Esophagus muscularis mucosa (tissue), 4 donors: ENCODE measurements at regions of chr21 and their contacts with region 1.

Region 1: DNA sequence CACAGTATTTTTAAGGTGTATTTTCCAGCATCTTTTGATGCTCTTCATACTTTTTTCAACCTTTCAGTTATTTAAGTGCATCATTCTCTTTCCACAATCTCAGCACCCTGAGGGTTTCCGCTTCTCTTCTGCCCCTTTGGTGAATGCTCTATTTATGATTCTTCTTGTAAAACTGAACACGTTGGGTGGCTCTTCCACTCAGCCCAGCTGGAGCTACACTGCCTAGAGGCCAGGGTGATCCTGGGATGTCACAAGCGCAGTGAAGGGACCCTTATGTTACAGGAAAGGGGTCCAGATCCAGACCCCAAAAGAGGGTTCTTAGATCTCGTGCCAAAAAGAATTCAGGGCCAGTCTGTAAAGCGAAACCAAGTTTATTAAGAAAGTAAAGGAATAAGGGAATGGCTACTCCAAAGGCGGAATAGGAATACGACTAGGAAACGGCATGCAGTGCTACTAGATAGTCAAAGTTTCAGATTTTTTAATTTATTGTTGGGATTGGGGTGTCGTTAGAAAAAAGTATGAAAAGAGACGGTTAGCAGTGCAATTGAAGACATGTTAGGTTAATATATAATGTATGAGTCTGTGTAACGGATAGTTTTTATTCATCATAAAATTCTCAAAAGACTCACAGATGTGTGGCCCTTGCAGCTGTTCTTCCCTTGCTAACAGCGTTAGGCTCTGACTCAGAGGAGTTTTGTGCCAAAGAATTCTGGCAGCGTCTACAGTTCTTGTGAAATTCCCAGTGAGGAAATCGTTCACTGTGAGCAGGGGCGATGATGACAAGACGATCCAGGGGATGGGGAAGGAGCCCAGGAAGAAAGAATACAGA is 14.4 kb upstream of the ERVH48-1 start:
- DNase-seq: peak; percentile 93
- H3K4me3 ChIP-seq: peak overlapping the region in 3 of 4 donors; percentile 18 to 29 (median 25)
- H3K27ac ChIP-seq: peak overlapping the region; percentile 68 to 75 (median 68)
- H3K4me1 ChIP-seq: peaks cover 0 to 21% (median 13%) of the 10 kb centered on the region in 4 donors
- H3K27me3 ChIP-seq: no peaks in the 10 kb centered on the region
- CTCF ChIP-seq: no peak
- EP300 ChIP-seq: no peak
- POLR2A ChIP-seq: no peak

Region 2: DNA sequence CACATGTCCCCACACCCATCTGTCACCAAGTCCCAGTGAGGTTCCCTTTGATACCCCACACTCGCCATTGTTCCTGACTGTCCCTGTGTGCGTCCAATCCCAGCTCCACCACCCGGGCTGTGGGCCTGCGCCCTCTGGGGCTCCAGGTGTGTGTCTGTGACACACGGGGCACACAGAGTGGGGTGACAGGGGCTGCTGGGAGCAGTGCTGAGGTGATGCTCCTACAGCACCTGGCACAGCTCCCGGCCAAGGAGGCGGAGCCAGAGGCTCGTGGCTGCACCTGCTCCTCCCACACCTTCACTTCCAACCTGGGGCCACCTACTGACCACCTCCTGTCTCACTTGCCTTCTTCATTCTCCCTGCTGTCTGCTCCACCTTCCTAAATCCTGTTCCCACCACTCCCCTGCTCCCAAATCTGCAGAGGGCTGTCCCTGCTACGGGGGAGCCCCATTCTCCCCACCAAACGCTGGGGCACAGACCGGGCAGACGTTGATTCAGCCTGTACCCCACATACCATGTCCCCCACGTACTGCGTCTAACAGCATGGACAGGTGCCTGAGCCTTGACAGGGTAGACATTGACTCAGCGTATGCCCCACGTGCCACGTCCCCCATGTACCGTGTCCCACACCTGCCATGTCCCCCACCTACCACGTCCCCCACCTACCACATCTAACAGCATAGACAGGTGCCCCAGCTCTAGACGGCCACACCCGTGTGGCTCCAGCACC is 76.9 kb before region 1 on chr21:
- intact Hi-C with region 1: no loop called
- DNase-seq: no peak
- H3K4me3 ChIP-seq: no peak overlapping the region
- H3K27ac ChIP-seq: no peak overlapping the region
- H3K4me1 ChIP-seq: peaks cover 0 to 5% (median 0%) of the 10 kb centered on the region in 4 donors
- H3K27me3 ChIP-seq: no peaks in the 10 kb centered on the region
- CTCF ChIP-seq: no peak
- EP300 ChIP-seq: no peak
- POLR2A ChIP-seq: no peak

Region 3: DNA sequence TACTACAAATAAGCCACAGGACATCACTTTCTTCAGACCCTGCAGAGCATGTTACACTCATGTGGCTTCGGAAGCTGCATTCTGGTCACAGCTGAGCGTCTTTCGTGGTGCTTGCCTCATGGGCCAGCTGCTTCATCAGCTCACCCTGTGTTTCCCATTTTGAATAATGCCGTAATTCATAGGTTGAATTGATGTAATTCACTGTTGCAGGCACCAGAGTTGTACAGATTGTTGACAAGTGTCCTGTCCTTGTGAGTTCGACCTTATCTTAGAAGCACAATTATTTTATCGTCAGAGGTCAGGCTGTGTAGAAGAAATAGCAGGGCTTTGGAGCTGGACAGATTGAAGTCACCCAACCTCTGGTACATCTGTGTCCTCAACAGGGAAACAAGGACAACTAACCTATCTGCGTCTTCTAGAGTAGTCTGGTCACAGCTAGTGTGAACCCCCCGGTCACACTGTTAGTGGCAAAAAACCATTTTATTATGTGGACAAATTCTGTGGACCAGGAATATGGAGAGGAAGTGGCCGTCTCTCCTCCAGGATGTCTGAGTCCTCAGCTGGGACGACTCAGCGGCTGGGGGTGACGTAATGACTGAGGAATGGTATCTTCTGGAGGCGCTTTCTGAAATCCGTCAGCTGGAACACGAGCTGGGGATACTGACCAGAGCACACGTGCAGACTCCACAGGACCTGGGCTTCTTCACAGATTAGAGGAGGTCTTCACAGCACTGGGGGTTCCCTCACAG is 52.4 kb after region 1 on chr21:
- intact Hi-C with region 1: loop called (anchors 10 kb)
- DNase-seq: peak; percentile 93
- H3K4me3 ChIP-seq: no peak overlapping the region
- H3K27ac ChIP-seq: peak overlapping the region; percentile 64 to 76 (median 71)
- H3K4me1 ChIP-seq: peaks cover 12 to 26% (median 22%) of the 10 kb centered on the region in 4 donors
- H3K27me3 ChIP-seq: no peaks in the 10 kb centered on the region
- CTCF ChIP-seq: no peak
- EP300 ChIP-seq: no peak
- POLR2A ChIP-seq: no peak